ENCODE measurements at regions of chr2 and their contacts with region 1.

Region 1: GRCh38 chr2:179751163-179751809 is 110.1 kb downstream of the ZNF385B start:
- H3K4me3 Mint-ChIP-seq: no peak overlapping the region
- H3K27ac Mint-ChIP-seq: no peak overlapping the region
- H3K4me1 Mint-ChIP-seq: no peaks in the 10 kb centered on the region
- H3K27me3 Mint-ChIP-seq: no peaks in the 10 kb centered on the region

Region 2: GRCh38 chr2:178628605-178629004 is 1122.7 kb before region 1 on chr2:
- intact Hi-C with region 1: no loop called
- H3K4me3 Mint-ChIP-seq: no peak overlapping the region
- H3K27ac Mint-ChIP-seq: no peak overlapping the region
- H3K4me1 Mint-ChIP-seq: no peaks in the 10 kb centered on the region
- H3K27me3 Mint-ChIP-seq: no peaks in the 10 kb centered on the region

Region 3: DNA sequence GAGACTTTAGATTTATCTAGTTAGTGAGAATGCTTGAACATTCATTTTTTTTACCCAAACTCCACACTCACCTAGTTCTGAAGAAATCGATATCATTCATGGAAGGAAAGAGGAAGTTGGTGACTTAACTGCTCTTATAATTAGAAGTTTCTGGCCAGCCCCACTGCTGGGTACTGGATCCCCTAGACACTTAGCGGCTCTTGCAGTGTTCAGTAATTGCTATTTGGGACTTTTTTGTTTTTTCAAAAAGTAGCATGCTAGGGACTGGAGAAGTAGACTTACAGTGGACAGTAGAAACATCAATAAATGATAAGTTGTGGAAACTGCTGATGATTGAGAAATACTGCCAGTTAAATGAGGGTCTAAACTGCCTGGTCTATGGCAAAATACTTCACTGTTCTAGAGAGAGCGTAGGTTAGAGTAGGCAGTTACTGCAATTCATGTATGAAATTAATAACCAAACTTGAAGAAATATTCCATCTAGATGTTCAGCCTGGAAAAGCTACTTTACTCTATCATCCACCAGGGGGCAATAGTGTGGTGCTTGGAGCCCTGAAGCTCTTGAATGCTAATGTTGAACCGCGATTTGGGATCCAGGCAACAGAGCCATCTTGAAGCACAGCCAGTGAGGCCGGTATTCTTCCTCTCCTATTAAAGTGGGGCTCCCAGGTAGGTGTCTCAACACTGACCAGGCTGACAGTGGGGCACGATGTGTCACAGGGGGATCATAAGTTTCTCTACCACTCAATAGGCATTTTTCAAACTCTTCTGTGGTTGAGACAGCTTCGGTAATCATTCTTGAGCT is 340.5 kb before region 1 on chr2:
- intact Hi-C with region 1: loop called (anchors 5 kb)
- H3K4me3 Mint-ChIP-seq: no peak overlapping the region
- H3K27ac Mint-ChIP-seq: no peak overlapping the region
- H3K4me1 Mint-ChIP-seq: peaks cover 9% of the 10 kb centered on the region
- H3K27me3 Mint-ChIP-seq: peaks cover 2% of the 10 kb centered on the region

Region 4: DNA sequence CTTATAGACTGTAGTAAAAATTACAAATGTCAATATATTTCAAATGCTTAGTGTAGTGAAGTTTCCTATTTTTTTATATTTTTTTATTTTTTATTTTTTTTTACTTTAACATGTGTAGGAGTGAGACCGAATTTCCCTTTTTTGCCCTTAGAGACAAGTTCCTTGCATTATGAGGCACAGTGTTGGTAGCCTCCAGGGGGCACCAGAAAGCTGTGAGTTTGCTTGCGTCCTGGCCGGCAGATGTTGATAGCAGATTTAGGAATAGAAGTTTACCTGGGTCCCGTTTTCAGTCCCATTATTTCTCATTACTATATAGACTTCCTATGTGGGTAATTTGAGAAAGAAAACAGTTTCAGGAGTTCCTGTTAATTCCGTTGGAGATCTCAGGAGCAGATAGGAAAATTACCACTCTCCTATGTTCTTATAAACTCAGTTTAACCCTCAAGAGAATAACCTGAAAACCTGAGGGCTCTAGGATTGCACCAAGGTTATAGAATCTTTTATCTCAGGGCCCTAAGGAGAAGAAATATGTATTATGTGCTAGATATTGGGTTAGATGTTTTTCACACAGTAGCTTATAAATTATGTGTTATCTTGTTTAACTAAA is 329.1 kb before region 1 on chr2:
- intact Hi-C with region 1: loop called (anchors 5 kb)
- H3K4me3 Mint-ChIP-seq: no peak overlapping the region
- H3K27ac Mint-ChIP-seq: no peak overlapping the region
- H3K4me1 Mint-ChIP-seq: no peaks in the 10 kb centered on the region
- H3K27me3 Mint-ChIP-seq: peaks cover 3% of the 10 kb centered on the region

Region 5: GRCh38 chr2:179861416-179862067 is 110.3 kb after region 1 on chr2 and contains the start of gene ZNF385B:
- intact Hi-C with region 1: no loop called
- H3K4me3 Mint-ChIP-seq: peak within 1 kb of the TSS; percentile 9
- H3K27ac Mint-ChIP-seq: no peak within 1 kb of the TSS
- H3K4me1 Mint-ChIP-seq: peaks cover 5% of the 10 kb centered on the region
- H3K27me3 Mint-ChIP-seq: peaks cover 53% of the 10 kb centered on the region

Measured in dendritic cell treated with granulocyte-macrophage colony-stimulating factor and Interleukin-4, amounts not matched to agents 40 ng/mL and 50 ng/mL, for 4 days (primary cell).